ENCODE measurements at regions of chr10 and their contacts with region 1.

Region 1: DNA sequence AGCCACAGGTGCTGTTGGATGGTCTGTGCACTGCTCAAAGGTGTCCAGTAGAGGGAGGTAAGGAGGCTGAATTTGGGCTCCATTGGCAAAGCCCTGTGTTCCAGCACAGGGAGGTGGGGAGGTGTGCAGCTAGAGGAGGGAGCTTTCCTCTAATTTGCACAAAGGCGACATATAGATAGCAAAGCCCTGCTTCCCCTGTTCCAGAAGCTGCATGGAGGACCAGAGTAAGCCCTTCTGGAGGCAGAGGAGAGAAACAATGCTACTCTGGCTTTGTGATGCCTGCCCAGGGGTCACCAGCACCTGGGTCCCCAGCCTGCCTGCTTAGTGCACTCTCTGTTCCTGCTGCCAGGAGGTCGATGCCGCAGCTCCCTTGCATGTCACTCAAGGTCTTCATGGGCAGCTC is 3.4 kb upstream of the ARHGAP22 start:
- DNase-seq: peak; percentile 74
- ATAC-seq: peak; percentile 85
- H3K4me3 ChIP-seq: no peak overlapping the region
- H3K4me3 Mint-ChIP-seq: no peak overlapping the region
- H3K27ac ChIP-seq: no peak overlapping the region
- H3K27ac Mint-ChIP-seq: no peak overlapping the region
- H3K4me1 ChIP-seq: peaks cover 23 to 27% of the 10 kb centered on the region in 2 donors
- H3K4me1 Mint-ChIP-seq: peaks cover 30% of the 10 kb centered on the region
- H3K27me3 ChIP-seq: peaks cover 0 to 16% (median 4%) of the 10 kb centered on the region in 4 experiments
- H3K27me3 Mint-ChIP-seq: peaks cover 13% of the 10 kb centered on the region
- CTCF ChIP-seq: peak; percentile 83

Region 2: GRCh38 chr10:48564466-48565160 is 43.7 kb before region 1 on chr10:
- CTCF ChIA-PET with region 1: interaction called, 10 read pairs
- POLR2A ChIA-PET with region 1: no interaction called
- intact Hi-C with region 1: no loop called
- DNase-seq: no peak
- ATAC-seq: no peak
- H3K4me3 ChIP-seq: no peak overlapping the region
- H3K4me3 Mint-ChIP-seq: no peak overlapping the region
- H3K27ac ChIP-seq: no peak overlapping the region
- H3K27ac Mint-ChIP-seq: no peak overlapping the region
- H3K4me1 ChIP-seq: no peaks in the 10 kb centered on the region
- H3K4me1 Mint-ChIP-seq: peaks cover 9% of the 10 kb centered on the region
- H3K27me3 ChIP-seq: no peaks in the 10 kb centered on the region
- H3K27me3 Mint-ChIP-seq: peaks cover 3% of the 10 kb centered on the region
- CTCF ChIP-seq: no peak

Region 3: GRCh38 chr10:48589266-48589665 is 19.0 kb before region 1 on chr10:
- CTCF ChIA-PET with region 1: interaction called, 30 read pairs
- POLR2A ChIA-PET with region 1: no interaction called
- intact Hi-C with region 1: no loop called
- DNase-seq: no peak
- ATAC-seq: no peak
- H3K4me3 ChIP-seq: no peak overlapping the region
- H3K4me3 Mint-ChIP-seq: no peak overlapping the region
- H3K27ac ChIP-seq: no peak overlapping the region
- H3K27ac Mint-ChIP-seq: no peak overlapping the region
- H3K4me1 ChIP-seq: peaks cover 8 to 12% of the 10 kb centered on the region in 2 donors
- H3K4me1 Mint-ChIP-seq: peaks cover 25% of the 10 kb centered on the region
- H3K27me3 ChIP-seq: no peaks in the 10 kb centered on the region
- H3K27me3 Mint-ChIP-seq: no peaks in the 10 kb centered on the region
- CTCF ChIP-seq: no peak

Region 4: DNA sequence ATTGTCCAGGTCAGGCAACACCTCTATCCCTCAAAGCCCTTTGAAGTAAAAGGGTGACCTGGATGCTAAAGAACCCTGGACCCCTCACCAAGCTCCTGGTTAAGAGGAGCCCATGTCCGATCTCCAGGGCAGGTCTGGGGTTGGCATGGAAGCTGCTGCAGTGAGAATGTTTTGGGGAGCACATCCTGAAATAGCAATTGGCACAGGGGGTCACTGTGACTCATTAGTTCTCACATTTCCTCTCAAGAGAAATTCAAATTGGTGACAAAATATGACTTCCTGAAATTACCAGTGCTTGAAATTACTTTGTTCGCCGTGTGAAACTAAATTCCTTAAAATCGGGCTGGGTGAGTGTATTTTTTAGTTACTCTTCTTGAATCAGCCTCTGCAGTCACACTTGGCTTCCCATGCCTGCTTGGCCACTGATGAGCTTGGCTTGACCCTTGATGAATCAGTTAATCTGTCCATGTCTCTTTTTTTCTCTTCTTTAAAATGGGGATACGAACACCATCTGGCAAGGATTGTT is 15.4 kb after region 1 on chr10:
- CTCF ChIA-PET with region 1: interaction called, 92 read pairs
- POLR2A ChIA-PET with region 1: no interaction called
- intact Hi-C with region 1: no loop called
- DNase-seq: no peak
- ATAC-seq: no peak
- H3K4me3 ChIP-seq: no peak overlapping the region
- H3K4me3 Mint-ChIP-seq: peak overlapping the region; percentile 45
- H3K27ac ChIP-seq: no peak overlapping the region
- H3K27ac Mint-ChIP-seq: peak overlapping the region; percentile 35
- H3K4me1 ChIP-seq: peaks cover 32% of the 10 kb centered on the region in 2 donors
- H3K4me1 Mint-ChIP-seq: peaks cover 35% of the 10 kb centered on the region
- H3K27me3 ChIP-seq: peaks cover 0 to 20% (median 0%) of the 10 kb centered on the region in 4 experiments
- H3K27me3 Mint-ChIP-seq: peaks cover 14% of the 10 kb centered on the region
- CTCF ChIP-seq: no peak

Region 5: GRCh38 chr10:48639632-48640031 is 31.4 kb after region 1 on chr10:
- CTCF ChIA-PET with region 1: interaction called, 53 read pairs
- POLR2A ChIA-PET with region 1: no interaction called
- intact Hi-C with region 1: loop called (anchors 2 kb)
- DNase-seq: no peak
- ATAC-seq: no peak
- H3K4me3 ChIP-seq: no peak overlapping the region
- H3K4me3 Mint-ChIP-seq: no peak overlapping the region
- H3K27ac ChIP-seq: no peak overlapping the region
- H3K27ac Mint-ChIP-seq: no peak overlapping the region
- H3K4me1 ChIP-seq: peaks cover 22 to 24% of the 10 kb centered on the region in 2 donors
- H3K4me1 Mint-ChIP-seq: peaks cover 28% of the 10 kb centered on the region
- H3K27me3 ChIP-seq: peaks cover 0 to 27% (median 16%) of the 10 kb centered on the region in 4 experiments
- H3K27me3 Mint-ChIP-seq: peaks cover 26% of the 10 kb centered on the region
- CTCF ChIP-seq: no peak

Region 6: DNA sequence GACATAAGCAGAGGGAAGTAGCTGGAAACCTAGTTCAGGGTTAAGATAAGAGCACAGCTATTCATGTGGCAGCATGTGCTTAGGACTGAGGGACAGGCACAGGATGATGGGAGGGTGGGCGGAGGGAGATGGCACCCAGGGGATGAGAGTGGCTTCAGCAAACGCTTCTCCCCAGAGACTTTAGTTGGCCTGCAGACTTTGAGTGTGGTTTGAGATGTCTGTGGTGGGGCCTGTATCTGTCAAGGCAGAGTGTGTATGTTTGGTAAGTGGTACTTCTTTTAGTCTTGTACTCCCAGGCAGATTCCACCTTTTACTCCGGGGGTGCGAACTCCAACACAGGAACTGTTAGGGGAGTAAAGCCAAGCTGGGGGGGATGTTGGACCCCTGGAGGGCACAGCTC is 165.3 kb after region 1 on chr10:
- CTCF ChIA-PET with region 1: no interaction called
- POLR2A ChIA-PET with region 1: no interaction called
- intact Hi-C with region 1: no loop called
- DNase-seq: no peak
- ATAC-seq: no peak
- H3K4me3 ChIP-seq: no peak overlapping the region
- H3K4me3 Mint-ChIP-seq: no peak overlapping the region
- H3K27ac ChIP-seq: no peak overlapping the region
- H3K27ac Mint-ChIP-seq: peak overlapping the region; percentile 23
- H3K4me1 ChIP-seq: no peaks in the 10 kb centered on the region
- H3K4me1 Mint-ChIP-seq: peaks cover 19% of the 10 kb centered on the region
- H3K27me3 ChIP-seq: no peaks in the 10 kb centered on the region
- H3K27me3 Mint-ChIP-seq: no peaks in the 10 kb centered on the region
- CTCF ChIP-seq: no peak

Region 7: GRCh38 chr10:50231515-50232260 is 1623.4 kb after region 1 on chr10:
- CTCF ChIA-PET with region 1: no interaction called
- POLR2A ChIA-PET with region 1: no interaction called
- intact Hi-C with region 1: no loop called
- DNase-seq: no peak
- ATAC-seq: no peak
- H3K4me3 ChIP-seq: no peak overlapping the region
- H3K4me3 Mint-ChIP-seq: no peak overlapping the region
- H3K27ac ChIP-seq: no peak overlapping the region
- H3K27ac Mint-ChIP-seq: no peak overlapping the region
- H3K4me1 ChIP-seq: no peaks in the 10 kb centered on the region
- H3K4me1 Mint-ChIP-seq: peaks cover 5% of the 10 kb centered on the region
- H3K27me3 ChIP-seq: peaks cover 0 to 10% (median 0%) of the 10 kb centered on the region in 4 experiments
- H3K27me3 Mint-ChIP-seq: peaks cover 8% of the 10 kb centered on the region
- CTCF ChIP-seq: no peak

Measured in B cell (primary cell).